ENCODE measurements at regions of chr2 and their contacts with region 1.

Region 1: DNA sequence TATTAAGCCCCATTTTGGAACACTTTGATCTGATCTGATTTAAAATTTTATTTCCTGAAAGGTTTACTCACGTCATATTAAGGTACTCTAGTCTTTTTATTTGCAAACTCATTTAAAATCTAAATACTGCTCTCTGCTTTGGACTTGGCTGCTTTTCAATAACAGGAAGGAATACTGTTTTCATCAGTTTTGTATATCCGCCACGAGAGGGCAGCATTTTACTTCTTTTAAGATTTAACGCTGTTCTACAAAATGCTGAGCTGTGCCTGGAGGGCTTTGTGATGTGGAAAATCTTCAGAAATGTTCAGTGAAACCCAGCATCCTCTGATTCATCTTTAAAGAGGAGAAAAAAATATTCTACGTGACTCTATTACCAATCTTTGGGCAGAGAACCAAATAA is 37.5 kb upstream of the SLC38A11 start:
- DNase-seq: peak in 7 of 9 experiments; percentile 6 to 70 (median 32)
- ATAC-seq: peak; percentile 49
- H3K4me3 ChIP-seq: no peak overlapping the region
- H3K4me3 Mint-ChIP-seq: no peak overlapping the region
- H3K27ac ChIP-seq: no peak overlapping the region
- H3K27ac Mint-ChIP-seq: no peak overlapping the region
- H3K4me1 ChIP-seq: no peaks in the 10 kb centered on the region
- H3K4me1 Mint-ChIP-seq: peaks cover 14% of the 10 kb centered on the region
- H3K27me3 ChIP-seq: no peaks in the 10 kb centered on the region
- H3K27me3 Mint-ChIP-seq: no peaks in the 10 kb centered on the region
- CTCF ChIP-seq: peak; percentile 57

Region 2: GRCh38 chr2:164205347-164205746 is 787.5 kb before region 1 on chr2:
- CTCF ChIA-PET with region 1: no interaction called
- POLR2A ChIA-PET with region 1: no interaction called
- intact Hi-C with region 1: no loop called
- DNase-seq: no peak
- ATAC-seq: no peak
- H3K4me3 ChIP-seq: no peak overlapping the region
- H3K4me3 Mint-ChIP-seq: no peak overlapping the region
- H3K27ac ChIP-seq: no peak overlapping the region
- H3K27ac Mint-ChIP-seq: no peak overlapping the region
- H3K4me1 ChIP-seq: no peaks in the 10 kb centered on the region
- H3K4me1 Mint-ChIP-seq: no peaks in the 10 kb centered on the region
- H3K27me3 ChIP-seq: no peaks in the 10 kb centered on the region
- H3K27me3 Mint-ChIP-seq: no peaks in the 10 kb centered on the region
- CTCF ChIP-seq: no peak

Region 3: DNA sequence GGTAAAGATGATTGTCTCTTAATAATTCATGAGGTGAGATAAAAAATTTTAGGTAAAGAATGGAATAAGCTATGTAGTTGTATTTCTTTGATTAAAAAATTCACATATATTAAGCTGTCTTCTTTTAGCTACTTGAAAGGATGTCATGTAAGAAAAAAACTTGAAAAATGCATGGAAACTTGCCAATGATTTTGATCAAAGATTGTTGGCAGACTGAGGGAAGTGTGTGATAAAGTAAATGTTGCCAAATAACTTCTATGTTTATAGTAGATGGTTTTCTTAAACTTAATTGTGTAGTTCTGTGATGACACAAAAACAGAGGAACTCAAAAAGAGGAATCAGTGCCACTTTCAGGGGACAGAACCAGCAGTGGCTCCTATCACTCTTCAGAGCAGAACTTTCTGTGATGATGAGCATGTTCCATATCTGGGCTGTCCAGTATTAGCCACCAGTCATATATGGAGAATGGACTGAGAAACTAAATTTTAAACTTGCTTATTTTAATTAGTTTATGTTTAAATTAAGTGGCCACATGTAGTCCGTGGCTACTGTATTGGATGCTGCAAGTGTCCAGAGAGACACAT is 14.4 kb after region 1 on chr2:
- CTCF ChIA-PET with region 1: no interaction called
- POLR2A ChIA-PET with region 1: no interaction called
- intact Hi-C with region 1: no loop called
- DNase-seq: no peak
- ATAC-seq: no peak
- H3K4me3 ChIP-seq: no peak overlapping the region
- H3K4me3 Mint-ChIP-seq: no peak overlapping the region
- H3K27ac ChIP-seq: no peak overlapping the region
- H3K27ac Mint-ChIP-seq: no peak overlapping the region
- H3K4me1 ChIP-seq: no peaks in the 10 kb centered on the region
- H3K4me1 Mint-ChIP-seq: no peaks in the 10 kb centered on the region
- H3K27me3 ChIP-seq: peaks cover 3 to 5% of the 10 kb centered on the region in 2 experiments
- H3K27me3 Mint-ChIP-seq: peaks cover 15% of the 10 kb centered on the region
- CTCF ChIP-seq: no peak

Region 4: GRCh38 chr2:165203689-165204559 is 211.1 kb after region 1 on chr2 and contains the start of gene SCN3A:
- CTCF ChIA-PET with region 1: interaction called, 3 read pairs
- POLR2A ChIA-PET with region 1: no interaction called
- intact Hi-C with region 1: loop called in 1 of 2 experiments (anchors 10 kb)
- DNase-seq: peak in 1 of 9 experiments; percentile 29
- ATAC-seq: no peak
- H3K4me3 ChIP-seq: no peak within 1 kb of the TSS
- H3K4me3 Mint-ChIP-seq: peak within 1 kb of the TSS; percentile 21
- H3K27ac ChIP-seq: no peak within 1 kb of the TSS
- H3K27ac Mint-ChIP-seq: no peak within 1 kb of the TSS
- H3K4me1 ChIP-seq: no peaks in the 10 kb centered on the region
- H3K4me1 Mint-ChIP-seq: peaks cover 6% of the 10 kb centered on the region
- H3K27me3 ChIP-seq: no peaks in the 10 kb centered on the region
- H3K27me3 Mint-ChIP-seq: no peaks in the 10 kb centered on the region
- CTCF ChIP-seq: peak; percentile 10
- total RNA-seq, gene SCN3A: 0.33 TPM in 1 of 2 experiments, not detected in the other

Region 5: GRCh38 chr2:165293440-165294353 is 300.9 kb after region 1 on chr2:
- CTCF ChIA-PET with region 1: no interaction called
- POLR2A ChIA-PET with region 1: no interaction called
- intact Hi-C with region 1: loop called in 1 of 2 experiments (anchors 10 kb)
- DNase-seq: peak in 6 of 9 experiments; percentile 11 to 91 (median 40)
- ATAC-seq: peak; percentile 100
- H3K4me3 ChIP-seq: no peak overlapping the region
- H3K4me3 Mint-ChIP-seq: no peak overlapping the region
- H3K27ac ChIP-seq: no peak overlapping the region
- H3K27ac Mint-ChIP-seq: no peak overlapping the region
- H3K4me1 ChIP-seq: no peaks in the 10 kb centered on the region
- H3K4me1 Mint-ChIP-seq: peaks cover 5% of the 10 kb centered on the region
- H3K27me3 ChIP-seq: no peaks in the 10 kb centered on the region
- H3K27me3 Mint-ChIP-seq: peaks cover 4% of the 10 kb centered on the region
- CTCF ChIP-seq: peak; percentile 73

Region 6: DNA sequence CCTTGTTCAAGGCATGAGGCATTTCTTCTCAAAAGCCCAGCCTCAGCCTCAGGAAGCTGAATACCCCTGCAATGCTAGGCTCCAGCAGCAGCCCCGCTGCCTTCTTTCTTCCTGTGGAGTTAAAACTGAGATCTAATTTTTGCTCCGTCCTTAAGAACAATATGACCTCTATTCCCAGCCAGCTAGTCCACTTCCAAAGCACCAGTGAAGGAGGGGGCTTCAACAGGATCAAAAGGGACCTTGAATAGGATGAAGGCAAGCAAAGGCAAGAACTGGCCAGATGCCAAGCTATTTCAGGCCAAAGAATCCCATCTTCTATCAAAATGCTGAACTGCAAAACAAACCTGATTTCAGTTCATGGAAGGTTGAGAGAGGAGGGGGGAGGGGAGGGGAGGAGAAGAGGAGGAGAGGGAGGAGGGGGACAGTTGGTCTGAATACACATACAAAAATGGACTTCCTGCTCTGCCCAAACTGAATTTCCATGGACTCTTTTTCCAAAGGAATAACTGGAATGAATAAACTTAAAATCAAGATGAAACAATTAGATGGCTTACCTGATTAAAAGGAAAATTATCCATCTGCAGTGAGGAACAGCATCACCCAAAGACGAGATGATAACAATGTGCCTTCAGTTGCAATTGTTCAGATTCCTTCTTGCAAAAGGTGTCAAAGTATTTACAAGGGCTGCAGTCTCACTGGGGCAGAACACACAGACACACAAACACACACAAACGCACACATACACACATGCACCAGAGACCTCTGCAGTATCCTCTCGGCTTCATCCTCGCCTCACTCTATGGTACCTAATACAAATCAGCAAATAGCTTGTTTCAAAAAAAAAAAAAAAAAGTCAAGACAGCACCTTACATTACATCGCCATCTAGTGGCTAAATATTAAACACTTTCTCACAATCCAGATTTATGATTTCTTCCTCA is 1134.7 kb after region 1 on chr2 and contains the start of gene SCN1A:
- CTCF ChIA-PET with region 1: no interaction called
- POLR2A ChIA-PET with region 1: no interaction called
- intact Hi-C with region 1: loop called in 1 of 2 experiments (anchors 2 kb)
- DNase-seq: peak in 2 of 9 experiments; percentile 29 to 51
- ATAC-seq: no peak
- H3K4me3 ChIP-seq: no peak within 1 kb of the TSS
- H3K4me3 Mint-ChIP-seq: no peak within 1 kb of the TSS
- H3K27ac ChIP-seq: no peak within 1 kb of the TSS
- H3K27ac Mint-ChIP-seq: no peak within 1 kb of the TSS
- H3K4me1 ChIP-seq: no peaks in the 10 kb centered on the region
- H3K4me1 Mint-ChIP-seq: peaks cover 4% of the 10 kb centered on the region
- H3K27me3 ChIP-seq: peaks cover 0 to 3% of the 10 kb centered on the region in 2 experiments
- H3K27me3 Mint-ChIP-seq: peaks cover 19% of the 10 kb centered on the region
- CTCF ChIP-seq: peak; percentile 77
- total RNA-seq, gene SCN1A: not detected

Measured in CD8-positive, alpha-beta T cell (primary cell).